Natural killer cell (primary cell): ENCODE measurements at regions of chr20 and their contacts with region 1.

Region 1: GRCh38 chr20:32652739-32653526 is 20.8 kb downstream of the C20orf203 start:
- DNase-seq: peak; percentile 87 to 91
- ATAC-seq: peak; percentile 93 to 99 (median 99)
- H3K4me3 ChIP-seq: no peak overlapping the region
- H3K4me3 Mint-ChIP-seq: no peak overlapping the region
- H3K27ac ChIP-seq: no peak overlapping the region
- H3K27ac Mint-ChIP-seq: no peak overlapping the region
- H3K4me1 ChIP-seq: peaks cover 19% of the 10 kb centered on the region
- H3K4me1 Mint-ChIP-seq: peaks cover 7 to 13% of the 10 kb centered on the region in 2 donors
- H3K27me3 ChIP-seq: no peaks in the 10 kb centered on the region
- H3K27me3 Mint-ChIP-seq: no peaks in the 10 kb centered on the region
- CTCF ChIP-seq: peak; percentile 87

Region 2: DNA sequence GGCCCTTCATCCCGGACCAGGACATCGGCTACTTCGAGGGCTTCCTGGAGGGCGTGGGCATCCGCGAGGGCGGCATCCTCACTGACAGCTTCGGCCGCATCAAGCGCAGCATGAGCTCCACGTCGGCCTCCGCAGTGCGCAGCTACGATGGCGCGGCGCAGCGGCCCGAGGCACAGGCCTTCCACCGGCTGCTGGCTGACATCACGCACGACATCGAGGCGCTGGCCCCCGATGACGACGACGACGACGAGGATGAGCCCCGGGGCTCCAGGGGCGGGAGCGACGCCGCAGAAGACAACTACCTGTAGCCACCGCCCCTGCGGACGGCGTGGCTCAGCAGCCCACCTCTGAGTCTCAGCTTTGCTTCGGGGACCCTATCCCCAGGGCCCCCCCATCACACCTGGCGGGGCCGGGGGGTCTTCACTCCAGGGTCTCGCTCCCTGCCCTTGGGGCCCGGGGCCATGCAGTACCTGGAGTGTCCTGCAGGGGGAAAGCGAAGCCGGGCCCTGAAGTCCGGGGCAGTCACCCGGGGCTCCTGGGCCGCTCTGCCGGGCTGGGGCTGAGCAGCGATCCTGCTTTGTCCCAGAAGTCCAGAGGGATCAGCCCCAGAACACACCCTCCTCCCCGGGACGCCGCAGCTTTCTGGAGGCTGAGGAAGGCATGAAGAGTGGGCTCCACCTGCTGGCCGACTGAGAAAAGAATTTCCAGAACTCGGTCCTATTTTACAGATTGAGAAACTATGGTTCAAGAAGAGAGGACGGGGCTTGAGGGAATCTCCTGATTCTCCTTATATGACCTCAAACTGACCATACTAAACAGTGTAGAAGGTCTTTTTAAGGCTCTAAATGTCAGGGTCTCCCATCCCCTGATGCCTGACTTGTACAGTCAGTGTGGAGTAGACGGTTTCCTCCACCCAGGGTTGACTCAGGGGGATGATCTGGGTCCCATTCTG is 621.6 kb before region 1 on chr20:
- intact Hi-C with region 1: loop called (anchors 5 kb)
- DNase-seq: peak; percentile 46 to 75
- ATAC-seq: peak; percentile 56 to 85 (median 78)
- H3K4me3 ChIP-seq: no peak overlapping the region
- H3K4me3 Mint-ChIP-seq: no peak overlapping the region
- H3K27ac ChIP-seq: no peak overlapping the region
- H3K27ac Mint-ChIP-seq: no peak overlapping the region
- H3K4me1 ChIP-seq: peaks cover 14% of the 10 kb centered on the region
- H3K4me1 Mint-ChIP-seq: no peaks in the 10 kb centered on the region
- H3K27me3 ChIP-seq: peaks cover 11% of the 10 kb centered on the region
- H3K27me3 Mint-ChIP-seq: peaks cover 23 to 58% of the 10 kb centered on the region in 2 donors
- CTCF ChIP-seq: peak; percentile 100

Region 3: GRCh38 chr20:32336918-32337347 is 316.0 kb before region 1 on chr20:
- intact Hi-C with region 1: loop called (anchors 2 kb)
- DNase-seq: peak in 1 of 2 donors; percentile 55
- ATAC-seq: peak; percentile 53 to 71 (median 70)
- H3K4me3 ChIP-seq: no peak overlapping the region
- H3K4me3 Mint-ChIP-seq: no peak overlapping the region
- H3K27ac ChIP-seq: no peak overlapping the region
- H3K27ac Mint-ChIP-seq: peak overlapping the region in 1 of 2 donors; percentile 33
- H3K4me1 ChIP-seq: peaks cover 9% of the 10 kb centered on the region
- H3K4me1 Mint-ChIP-seq: peaks cover 0 to 12% of the 10 kb centered on the region in 2 donors
- H3K27me3 ChIP-seq: no peaks in the 10 kb centered on the region
- H3K27me3 Mint-ChIP-seq: no peaks in the 10 kb centered on the region
- CTCF ChIP-seq: peak; percentile 46

Region 4: GRCh38 chr20:32521780-32522525 is 131.0 kb before region 1 on chr20:
- intact Hi-C with region 1: loop called (anchors 1 kb)
- DNase-seq: peak; percentile 65 to 86
- ATAC-seq: peak; percentile 74 to 89 (median 89)
- H3K4me3 ChIP-seq: no peak overlapping the region
- H3K4me3 Mint-ChIP-seq: no peak overlapping the region
- H3K27ac ChIP-seq: peak overlapping the region; percentile 22
- H3K27ac Mint-ChIP-seq: peak overlapping the region; percentile 80
- H3K4me1 ChIP-seq: peaks cover 61% of the 10 kb centered on the region
- H3K4me1 Mint-ChIP-seq: peaks cover 52 to 57% of the 10 kb centered on the region in 2 donors
- H3K27me3 ChIP-seq: no peaks in the 10 kb centered on the region
- H3K27me3 Mint-ChIP-seq: no peaks in the 10 kb centered on the region
- CTCF ChIP-seq: peak; percentile 83

Region 5: GRCh38 chr20:32636283-32636682 is 16.6 kb before region 1 on chr20:
- intact Hi-C with region 1: no loop called
- DNase-seq: no peak
- ATAC-seq: no peak
- H3K4me3 ChIP-seq: no peak overlapping the region
- H3K4me3 Mint-ChIP-seq: no peak overlapping the region
- H3K27ac ChIP-seq: no peak overlapping the region
- H3K27ac Mint-ChIP-seq: no peak overlapping the region
- H3K4me1 ChIP-seq: no peaks in the 10 kb centered on the region
- H3K4me1 Mint-ChIP-seq: no peaks in the 10 kb centered on the region
- H3K27me3 ChIP-seq: no peaks in the 10 kb centered on the region
- H3K27me3 Mint-ChIP-seq: peaks cover 0 to 3% of the 10 kb centered on the region in 2 donors
- CTCF ChIP-seq: no peak

Region 6: DNA sequence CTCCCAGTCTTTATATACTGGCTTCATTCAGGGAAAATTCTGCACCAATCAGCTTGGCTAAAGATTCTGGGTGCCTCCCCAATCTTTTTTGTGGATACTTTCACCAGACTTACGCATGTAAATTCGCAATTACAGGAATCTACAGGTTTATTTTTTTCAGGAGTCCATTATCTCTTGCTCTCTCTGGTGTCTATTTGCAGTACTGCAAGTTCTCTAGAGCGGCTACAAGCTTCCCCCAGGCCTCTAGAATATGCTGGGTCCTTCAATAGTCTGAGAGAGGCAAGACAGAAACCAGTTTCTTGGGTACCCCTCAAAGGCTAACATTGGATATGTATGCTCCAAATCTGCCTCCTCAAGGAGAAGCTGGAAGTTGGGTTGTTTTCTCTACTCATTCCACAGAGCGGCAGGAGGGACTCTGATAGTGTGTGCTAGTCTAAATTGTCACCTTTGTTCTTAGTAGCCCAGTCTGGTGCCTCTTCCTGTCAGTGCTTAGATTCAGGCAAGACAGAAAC is 292.8 kb after region 1 on chr20:
- intact Hi-C with region 1: no loop called
- DNase-seq: peak in 1 of 2 donors; percentile 71
- ATAC-seq: peak in 1 of 3 donors; percentile 48
- H3K4me3 ChIP-seq: no peak overlapping the region
- H3K4me3 Mint-ChIP-seq: no peak overlapping the region
- H3K27ac ChIP-seq: no peak overlapping the region
- H3K27ac Mint-ChIP-seq: no peak overlapping the region
- H3K4me1 ChIP-seq: no peaks in the 10 kb centered on the region
- H3K4me1 Mint-ChIP-seq: no peaks in the 10 kb centered on the region
- H3K27me3 ChIP-seq: no peaks in the 10 kb centered on the region
- H3K27me3 Mint-ChIP-seq: peaks cover 6 to 19% of the 10 kb centered on the region in 2 donors
- CTCF ChIP-seq: no peak